Activated CD8-positive, alpha-beta memory T cell treated with anti-CD3 and anti-CD28 coated beads, Interleukin-2, amount 10 ng/mL, durations not matched to agents 7 days and 5 days (primary cell): ENCODE measurements at regions of chr22 and their contacts with region 1.

Region 1: GRCh38 chr22:38051900-38052862 is 5.0 kb upstream of the PICK1 start:
- DNase-seq: peak; percentile 83
- ATAC-seq: peak; percentile 82
- H3K4me3 Mint-ChIP-seq: no peak overlapping the region
- H3K27ac Mint-ChIP-seq: no peak overlapping the region
- H3K4me1 Mint-ChIP-seq: peaks cover 8% of the 10 kb centered on the region
- H3K27me3 Mint-ChIP-seq: peaks cover 16% of the 10 kb centered on the region

Region 2: GRCh38 chr22:38062791-38063190 is 10.6 kb after region 1 on chr22:
- CTCF ChIA-PET with region 1: interaction called, 12 read pairs
- DNase-seq: no peak
- ATAC-seq: no peak
- H3K4me3 Mint-ChIP-seq: no peak overlapping the region
- H3K27ac Mint-ChIP-seq: no peak overlapping the region
- H3K4me1 Mint-ChIP-seq: peaks cover 4% of the 10 kb centered on the region
- H3K27me3 Mint-ChIP-seq: no peaks in the 10 kb centered on the region

Region 3: DNA sequence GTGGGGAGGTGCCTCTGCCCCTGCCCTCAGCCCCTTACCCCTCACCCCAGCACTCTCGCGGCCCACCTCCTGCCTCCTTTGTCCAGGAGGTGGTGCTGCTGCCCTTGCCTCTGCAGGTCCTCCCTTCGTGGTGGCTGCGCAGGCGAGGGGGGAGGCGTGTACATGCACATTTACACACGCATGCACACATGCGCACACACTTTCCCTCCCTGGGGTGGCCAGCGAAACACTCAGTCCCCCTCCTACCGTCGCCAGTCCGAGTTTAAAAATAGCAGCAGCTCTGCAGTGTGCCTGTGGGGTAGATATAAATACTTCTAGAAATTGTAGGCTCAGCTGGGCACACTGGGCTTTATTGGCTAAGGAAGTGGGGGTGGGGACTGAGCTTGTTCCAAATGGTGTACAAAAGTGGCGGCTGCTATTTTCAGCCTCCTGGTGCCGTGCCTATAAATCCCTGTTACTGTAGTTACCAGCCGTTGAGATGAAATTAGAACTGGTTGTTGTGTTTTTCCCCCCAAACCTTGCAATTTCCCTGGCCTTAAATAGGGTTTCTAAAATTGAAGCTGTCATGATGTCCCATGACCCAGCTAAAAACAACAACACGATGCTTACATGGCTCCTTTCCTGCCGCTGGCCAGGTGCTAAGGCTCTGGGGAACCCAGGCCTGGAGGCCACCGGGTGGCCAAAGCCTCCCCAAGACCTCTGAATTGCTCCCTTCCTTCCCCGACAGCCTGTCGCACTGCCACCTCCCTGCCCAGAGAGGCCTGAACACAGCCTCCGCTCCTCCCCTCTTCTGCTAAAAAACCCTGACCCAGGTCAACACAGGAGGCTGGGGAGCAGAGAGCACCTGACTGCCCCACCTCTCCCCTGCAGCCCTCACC is 17.4 kb after region 1 on chr22:
- CTCF ChIA-PET with region 1: interaction called, 11 read pairs
- DNase-seq: no peak
- ATAC-seq: no peak
- H3K4me3 Mint-ChIP-seq: no peak overlapping the region
- H3K27ac Mint-ChIP-seq: no peak overlapping the region
- H3K4me1 Mint-ChIP-seq: no peaks in the 10 kb centered on the region
- H3K27me3 Mint-ChIP-seq: no peaks in the 10 kb centered on the region

Region 4: GRCh38 chr22:38230108-38230825 is 178.1 kb after region 1 on chr22:
- CTCF ChIA-PET with region 1: interaction called, 22 read pairs
- DNase-seq: peak; percentile 66
- ATAC-seq: peak; percentile 51
- H3K4me3 Mint-ChIP-seq: no peak overlapping the region
- H3K27ac Mint-ChIP-seq: no peak overlapping the region
- H3K4me1 Mint-ChIP-seq: peaks cover 17% of the 10 kb centered on the region
- H3K27me3 Mint-ChIP-seq: no peaks in the 10 kb centered on the region

Region 5: DNA sequence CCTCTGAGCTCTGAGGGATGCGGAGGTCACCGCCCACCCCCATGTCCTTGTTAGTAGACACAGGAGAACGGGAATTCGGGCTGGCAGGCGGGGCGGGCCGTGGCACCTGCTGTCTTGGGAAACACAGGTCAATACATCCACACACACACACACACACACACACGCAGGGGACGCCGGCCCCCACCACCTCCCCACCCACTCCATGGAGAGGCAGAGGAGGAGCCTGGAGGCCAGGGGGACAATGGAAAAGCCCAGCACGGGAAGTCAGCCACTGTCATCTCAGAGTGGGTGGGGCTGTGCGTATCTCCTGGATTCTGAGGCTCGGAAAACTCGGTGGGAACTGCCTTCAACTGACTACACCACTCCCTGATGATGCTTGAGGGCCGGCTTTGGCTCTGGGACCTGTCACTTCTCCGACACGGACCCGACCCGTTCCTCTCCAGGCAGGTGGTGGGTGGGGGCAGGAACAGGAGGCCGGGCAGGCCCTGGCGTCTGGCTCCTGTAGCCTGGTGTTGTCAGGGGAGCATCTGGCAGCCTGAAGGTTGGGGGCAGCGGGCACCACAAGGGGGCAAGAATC is 239.1 kb after region 1 on chr22:
- CTCF ChIA-PET with region 1: no interaction called
- DNase-seq: no peak
- ATAC-seq: no peak
- H3K4me3 Mint-ChIP-seq: no peak overlapping the region
- H3K27ac Mint-ChIP-seq: no peak overlapping the region
- H3K4me1 Mint-ChIP-seq: no peaks in the 10 kb centered on the region
- H3K27me3 Mint-ChIP-seq: no peaks in the 10 kb centered on the region

Region 6: DNA sequence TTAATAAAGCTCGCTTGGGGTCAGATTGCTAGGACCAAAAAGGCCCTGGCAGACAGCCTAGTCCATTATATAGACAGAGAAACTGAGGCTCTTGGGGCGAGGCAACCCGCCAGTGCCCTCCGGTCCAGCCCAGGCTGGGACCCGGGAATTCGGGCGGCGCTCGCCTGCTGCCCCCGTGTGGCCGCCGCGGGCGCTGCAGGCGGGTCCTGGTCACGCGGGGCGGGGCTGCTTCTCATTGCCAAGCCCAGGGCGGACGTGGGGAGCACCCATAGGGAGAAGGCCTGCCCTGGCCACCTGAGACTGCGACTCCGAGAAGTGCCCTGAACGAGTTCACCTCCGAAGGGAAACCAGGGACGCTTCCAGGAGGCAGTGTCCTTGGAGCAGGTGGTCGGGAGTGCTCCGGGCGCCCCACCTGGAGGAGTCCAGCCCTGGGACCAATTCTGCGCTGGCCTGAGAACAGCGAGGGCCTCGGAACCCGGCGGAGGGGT is 301.0 kb after region 1 on chr22:
- CTCF ChIA-PET with region 1: interaction called, 32 read pairs
- DNase-seq: peak; percentile 66
- ATAC-seq: peak; percentile 83
- H3K4me3 Mint-ChIP-seq: no peak overlapping the region
- H3K27ac Mint-ChIP-seq: no peak overlapping the region
- H3K4me1 Mint-ChIP-seq: no peaks in the 10 kb centered on the region
- H3K27me3 Mint-ChIP-seq: no peaks in the 10 kb centered on the region

Region 7: GRCh38 chr22:38569972-38570778 is 518.0 kb after region 1 on chr22 and contains the start of gene DMC1:
- CTCF ChIA-PET with region 1: interaction called, 29 read pairs
- DNase-seq: peak; percentile 99
- ATAC-seq: peak; percentile 89
- H3K4me3 Mint-ChIP-seq: peak within 1 kb of the TSS; percentile 92
- H3K27ac Mint-ChIP-seq: peak within 1 kb of the TSS; percentile 98
- H3K4me1 Mint-ChIP-seq: peaks cover 23% of the 10 kb centered on the region
- H3K27me3 Mint-ChIP-seq: no peaks in the 10 kb centered on the region
- total RNA-seq, gene DMC1: 13.6 to 16.9 TPM